ENCODE measurements at regions of chrX and their contacts with region 1.

Region 1: DNA sequence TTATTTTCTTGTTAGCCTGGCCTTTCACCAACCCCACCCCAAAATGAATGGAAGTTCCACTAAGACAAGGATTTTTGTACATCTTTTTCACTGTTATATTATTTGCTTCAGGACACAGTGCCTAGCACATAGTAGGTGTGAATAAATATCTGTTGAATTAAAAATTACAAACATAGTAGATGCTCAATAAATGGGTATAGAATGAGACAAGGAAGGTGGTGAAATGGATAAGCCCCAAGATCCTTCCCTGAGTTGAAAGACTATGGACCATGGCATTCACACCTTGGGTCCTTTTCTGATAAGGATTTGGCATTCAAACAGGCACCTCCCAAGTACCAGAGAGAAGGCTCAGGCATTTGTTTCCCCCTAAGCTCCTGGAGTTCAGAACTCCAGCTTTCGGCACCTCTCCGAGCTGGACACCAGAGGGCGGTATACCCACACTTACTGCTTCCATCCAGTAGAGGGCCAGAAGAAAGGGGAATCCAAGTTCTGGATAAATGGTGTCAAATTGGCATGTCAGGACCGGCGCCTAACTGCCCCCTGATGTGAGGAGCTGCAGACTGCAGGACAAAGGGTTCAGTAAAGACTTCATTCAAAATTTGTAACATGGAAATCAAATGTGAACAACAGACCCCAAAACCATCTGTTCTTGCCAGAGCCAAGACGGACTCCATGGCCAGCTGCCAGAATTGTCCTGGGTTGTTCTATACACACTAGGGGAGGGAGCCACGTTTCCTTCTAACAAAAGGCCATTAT is 193.0 kb downstream of the GPC3 start:
- DNase-seq: peak; percentile 26
- H3K4me3 ChIP-seq: peak overlapping the region; percentile 38
- H3K27ac ChIP-seq: no peak overlapping the region
- H3K27me3 ChIP-seq: no peaks in the 10 kb centered on the region
- CTCF ChIP-seq: peak; percentile 100

Region 2: GRCh38 chrX:133698298-133698697 is 94.1 kb before region 1 on chrX:
- CTCF ChIA-PET with region 1: interaction called, 19 read pairs
- POLR2A ChIA-PET with region 1: no interaction called
- DNase-seq: peak; percentile 4
- H3K4me3 ChIP-seq: no peak overlapping the region
- H3K27ac ChIP-seq: no peak overlapping the region
- H3K27me3 ChIP-seq: no peaks in the 10 kb centered on the region
- CTCF ChIP-seq: peak; percentile 33

Region 3: DNA sequence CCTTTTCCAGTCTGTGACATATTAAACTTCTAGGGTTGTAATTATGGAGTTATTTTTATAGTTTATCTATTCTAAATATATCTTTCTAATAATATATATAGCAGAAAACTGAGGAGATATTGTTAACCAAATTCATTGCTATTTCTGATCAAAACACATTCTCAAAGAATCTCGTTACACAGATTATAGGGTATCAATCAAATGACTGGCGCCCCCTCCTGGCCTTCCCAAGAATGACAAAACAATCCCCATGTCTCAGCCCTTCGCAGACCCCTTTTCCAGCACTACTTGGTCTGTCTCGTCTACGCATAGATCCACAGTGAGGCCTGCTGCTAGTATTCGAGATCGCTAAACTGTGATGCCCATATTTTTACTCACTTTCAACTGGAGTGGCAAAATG is 16.3 kb before region 1 on chrX:
- CTCF ChIA-PET with region 1: interaction called, 17 read pairs
- POLR2A ChIA-PET with region 1: no interaction called
- DNase-seq: no peak
- H3K4me3 ChIP-seq: no peak overlapping the region
- H3K27ac ChIP-seq: no peak overlapping the region
- H3K27me3 ChIP-seq: no peaks in the 10 kb centered on the region
- CTCF ChIP-seq: peak; percentile 51

Region 4: GRCh38 chrX:133838761-133839676 is 46.6 kb after region 1 on chrX:
- CTCF ChIA-PET with region 1: interaction called, 17 read pairs
- POLR2A ChIA-PET with region 1: no interaction called
- DNase-seq: no peak
- H3K4me3 ChIP-seq: no peak overlapping the region
- H3K27ac ChIP-seq: no peak overlapping the region
- H3K27me3 ChIP-seq: no peaks in the 10 kb centered on the region
- CTCF ChIP-seq: peak; percentile 64

Region 5: DNA sequence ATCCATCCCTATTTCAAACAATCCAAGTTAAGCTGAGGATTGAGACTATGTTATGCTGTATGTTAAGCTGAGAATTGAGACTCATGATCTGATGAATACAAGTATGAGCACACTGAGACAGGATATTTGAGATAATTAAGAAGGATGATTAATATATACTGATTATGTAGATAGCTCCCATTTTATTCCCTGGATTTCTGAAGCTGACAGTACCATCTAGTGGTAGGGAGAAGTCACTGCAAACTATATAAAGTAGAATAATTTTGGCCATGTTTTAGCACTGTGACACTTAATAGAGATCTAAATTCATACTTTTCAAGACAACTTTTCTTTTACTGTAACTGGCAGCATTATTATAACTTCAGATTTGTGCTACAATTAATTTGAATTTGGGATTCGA is 603.8 kb after region 1 on chrX:
- CTCF ChIA-PET with region 1: interaction called, 18 read pairs
- POLR2A ChIA-PET with region 1: no interaction called
- DNase-seq: no peak
- H3K4me3 ChIP-seq: no peak overlapping the region
- H3K27ac ChIP-seq: no peak overlapping the region
- H3K27me3 ChIP-seq: no peaks in the 10 kb centered on the region
- CTCF ChIP-seq: peak; percentile 59